ENCODE measurements at regions of chrX and their contacts with region 1.

Region 1: DNA sequence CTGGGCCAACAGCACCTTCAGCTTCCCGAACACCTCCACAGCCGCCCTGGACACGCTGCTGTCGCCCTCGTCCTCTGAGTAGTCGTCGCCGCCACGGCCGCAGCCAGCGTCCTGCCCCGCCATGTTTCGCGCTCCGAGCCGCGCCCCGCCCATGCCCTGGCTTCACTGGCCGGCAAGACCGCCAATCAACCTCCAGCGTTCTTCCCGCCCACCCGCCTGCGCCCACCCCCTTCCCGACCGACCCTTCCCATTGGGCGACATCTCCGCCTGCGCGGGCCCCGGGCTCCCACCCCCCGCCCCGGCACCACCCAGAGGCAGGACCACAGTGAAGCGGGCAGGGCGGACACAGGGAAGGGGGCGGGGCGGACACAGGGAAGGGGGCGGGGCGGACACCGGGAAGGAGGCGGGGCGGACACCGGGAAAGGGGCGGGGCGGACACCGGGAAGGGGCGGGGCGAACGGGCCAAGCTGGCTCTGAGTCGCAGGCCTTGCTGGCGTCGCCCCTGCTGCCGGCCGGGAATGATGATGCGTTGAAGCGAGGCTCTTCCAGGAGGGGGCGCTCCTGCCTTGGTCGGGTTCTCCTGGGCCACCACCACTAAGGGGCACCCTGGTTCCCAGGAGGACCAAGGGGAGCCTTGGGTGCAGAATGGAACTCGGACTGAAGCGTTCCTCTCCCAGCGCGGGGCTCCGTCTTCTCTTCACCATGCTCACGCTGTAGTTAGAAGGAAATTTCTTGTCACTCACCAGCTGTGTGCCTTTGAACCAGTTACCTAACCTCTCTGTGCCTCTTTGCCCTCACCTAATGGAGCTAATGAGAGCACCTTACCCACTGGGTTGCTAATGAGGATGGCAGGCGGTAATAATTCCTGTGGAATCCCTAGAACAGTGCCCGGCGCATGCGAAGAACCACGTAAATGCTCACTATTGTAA is at the start of gene HAUS7:
- DNase-seq: peak; percentile 94
- H3K4me3 ChIP-seq: peak within 1 kb of the TSS; percentile 41 to 70 (median 62)
- H3K27ac ChIP-seq: peak within 1 kb of the TSS; percentile 70 to 86 (median 72)
- H3K4me1 ChIP-seq: peaks cover 0 to 19% (median 11%) of the 10 kb centered on the region in 4 donors
- H3K27me3 ChIP-seq: peaks cover 0 to 2% (median 0%) of the 10 kb centered on the region in 3 donors
- CTCF ChIP-seq: peak; percentile 29 to 52 (median 44)
- EP300 ChIP-seq: no peak
- POLR2A ChIP-seq: no peak
- total RNA-seq, gene HAUS7: 16.8 to 28.2 (median 25.4) TPM

Region 2: GRCh38 chrX:153333768-153334645 is 136.7 kb before region 1 on chrX and contains the start of gene ZNF275:
- intact Hi-C with region 1: loop called (anchors 10 kb)
- DNase-seq: peak; percentile 88
- H3K4me3 ChIP-seq: peak within 1 kb of the TSS; percentile 55 to 71 (median 66)
- H3K27ac ChIP-seq: peak within 1 kb of the TSS; percentile 59 to 80 (median 71)
- H3K4me1 ChIP-seq: peaks cover 0 to 9% (median 9%) of the 10 kb centered on the region in 4 donors
- H3K27me3 ChIP-seq: no peaks in the 10 kb centered on the region
- CTCF ChIP-seq: no peak
- EP300 ChIP-seq: no peak
- POLR2A ChIP-seq: no peak
- total RNA-seq, gene ZNF275: 8.6 to 13.3 (median 9.9) TPM

Region 3: DNA sequence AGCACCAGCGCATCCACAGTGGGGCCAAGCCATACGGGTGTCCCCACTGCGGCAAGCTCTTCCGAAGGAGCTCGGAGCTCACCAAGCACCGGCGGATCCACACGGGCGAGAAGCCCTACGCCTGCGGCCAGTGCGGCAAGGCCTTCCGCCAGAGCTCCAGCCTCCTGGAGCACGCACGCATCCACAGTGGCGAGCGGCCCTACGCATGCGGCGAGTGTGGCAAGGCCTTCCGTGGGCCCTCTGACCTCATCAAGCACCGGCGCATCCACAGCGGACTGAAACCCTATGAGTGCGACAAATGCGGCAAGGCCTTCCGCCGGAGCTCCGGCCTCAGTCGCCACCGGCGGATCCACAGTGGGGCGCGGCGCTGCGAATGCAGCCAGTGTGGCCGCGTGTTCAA is 123.2 kb before region 1 on chrX:
- intact Hi-C with region 1: no loop called
- DNase-seq: no peak
- H3K4me3 ChIP-seq: no peak overlapping the region
- H3K27ac ChIP-seq: no peak overlapping the region
- H3K4me1 ChIP-seq: no peaks in the 10 kb centered on the region
- H3K27me3 ChIP-seq: no peaks in the 10 kb centered on the region
- CTCF ChIP-seq: no peak
- EP300 ChIP-seq: no peak
- POLR2A ChIP-seq: no peak

Region 4: DNA sequence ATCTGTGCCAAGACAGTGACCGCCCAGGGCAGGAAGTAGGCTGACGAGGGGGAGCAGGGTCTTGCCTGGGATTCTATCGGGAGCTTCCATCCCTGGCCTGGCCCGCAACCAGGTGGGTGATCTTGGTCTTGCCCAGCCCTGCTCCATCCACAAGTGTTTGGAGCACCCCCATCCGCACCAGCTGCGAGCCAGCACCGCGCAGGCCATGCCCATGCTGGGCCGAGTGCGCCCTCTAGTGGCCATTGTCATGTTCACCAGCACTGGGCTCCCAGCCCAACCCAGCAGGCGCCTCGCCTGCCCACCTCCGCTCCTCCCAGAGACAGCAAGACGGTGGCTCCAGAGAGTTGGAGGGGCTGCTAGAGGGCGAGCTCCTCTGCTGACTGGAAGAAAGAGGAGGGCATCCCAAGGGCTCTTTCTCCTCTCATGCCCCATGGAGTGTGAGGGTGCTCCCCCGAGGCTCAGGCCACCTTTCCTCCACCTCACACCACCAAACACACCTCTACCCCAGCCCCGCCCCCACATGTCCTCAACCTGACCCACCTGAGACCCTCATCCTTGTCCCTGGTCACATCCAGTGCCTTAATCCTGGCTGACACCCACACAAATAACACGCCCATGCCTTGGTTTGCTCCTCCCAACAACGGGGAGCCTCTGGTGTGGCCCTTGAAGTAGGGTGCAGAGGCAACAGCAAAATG is 36.9 kb after region 1 on chrX:
- intact Hi-C with region 1: loop called (anchors 1 kb)
- DNase-seq: peak; percentile 90
- H3K4me3 ChIP-seq: no peak overlapping the region
- H3K27ac ChIP-seq: no peak overlapping the region
- H3K4me1 ChIP-seq: no peaks in the 10 kb centered on the region
- H3K27me3 ChIP-seq: no peaks in the 10 kb centered on the region
- CTCF ChIP-seq: peak; percentile 50 to 71 (median 62)
- EP300 ChIP-seq: no peak
- POLR2A ChIP-seq: no peak

Measured in sigmoid colon (tissue), 7 donors.